Pancreas (tissue), 10 donors: ENCODE measurements at regions of chr2 and their contacts with region 1.

Region 1: DNA sequence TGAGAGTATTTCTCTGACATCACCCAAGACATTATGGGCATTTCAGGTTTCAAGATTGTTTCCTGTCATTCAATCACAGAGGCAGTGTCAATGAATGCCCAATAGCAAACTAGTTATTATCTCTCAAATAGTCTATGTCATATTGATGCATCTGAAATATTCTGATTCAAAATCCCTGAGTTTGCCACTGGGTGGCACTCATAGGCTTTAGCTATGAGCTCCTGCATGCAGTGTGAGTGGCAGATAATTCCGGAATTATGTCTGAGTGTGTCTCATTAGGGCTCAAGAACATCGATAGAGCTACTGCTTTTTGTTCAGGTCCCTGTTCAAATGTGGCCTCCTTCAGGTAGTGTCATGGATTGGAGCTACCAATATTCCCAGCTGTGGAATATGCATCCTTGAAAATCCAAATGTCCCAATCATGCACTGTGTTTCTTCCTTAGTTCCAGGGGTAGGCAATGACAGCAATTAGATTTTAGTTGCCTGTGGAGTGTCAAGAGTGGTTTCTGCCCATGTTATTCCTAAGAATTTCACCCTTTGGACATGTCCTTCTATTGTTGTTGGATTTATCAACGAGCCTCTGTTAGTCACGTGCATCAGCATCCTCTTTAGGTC is 7.8 kb upstream of the OR6B3 start:
- DNase-seq: peak in 2 of 6 donors; percentile 13 to 43
- ATAC-seq: peak; percentile 64 to 82 (median 74)
- H3K4me3 ChIP-seq: no peak overlapping the region
- H3K27ac ChIP-seq: no peak overlapping the region
- H3K4me1 ChIP-seq: no peaks in the 10 kb centered on the region
- H3K27me3 ChIP-seq: peaks cover 0 to 6% (median 0%) of the 10 kb centered on the region in 4 donors
- CTCF ChIP-seq: peak; percentile 19 to 34 (median 25)

Region 2: GRCh38 chr2:240143801-240144648 is 82.9 kb after region 1 on chr2:
- intact Hi-C with region 1: loop called (anchors 2 to 10 kb)
- DNase-seq: peak; percentile 44 to 93 (median 79)
- ATAC-seq: peak; percentile 71 to 98 (median 94)
- H3K4me3 ChIP-seq: no peak overlapping the region
- H3K27ac ChIP-seq: no peak overlapping the region
- H3K4me1 ChIP-seq: no peaks in the 10 kb centered on the region
- H3K27me3 ChIP-seq: no peaks in the 10 kb centered on the region
- CTCF ChIP-seq: peak; percentile 87 to 95 (median 90)

Region 3: DNA sequence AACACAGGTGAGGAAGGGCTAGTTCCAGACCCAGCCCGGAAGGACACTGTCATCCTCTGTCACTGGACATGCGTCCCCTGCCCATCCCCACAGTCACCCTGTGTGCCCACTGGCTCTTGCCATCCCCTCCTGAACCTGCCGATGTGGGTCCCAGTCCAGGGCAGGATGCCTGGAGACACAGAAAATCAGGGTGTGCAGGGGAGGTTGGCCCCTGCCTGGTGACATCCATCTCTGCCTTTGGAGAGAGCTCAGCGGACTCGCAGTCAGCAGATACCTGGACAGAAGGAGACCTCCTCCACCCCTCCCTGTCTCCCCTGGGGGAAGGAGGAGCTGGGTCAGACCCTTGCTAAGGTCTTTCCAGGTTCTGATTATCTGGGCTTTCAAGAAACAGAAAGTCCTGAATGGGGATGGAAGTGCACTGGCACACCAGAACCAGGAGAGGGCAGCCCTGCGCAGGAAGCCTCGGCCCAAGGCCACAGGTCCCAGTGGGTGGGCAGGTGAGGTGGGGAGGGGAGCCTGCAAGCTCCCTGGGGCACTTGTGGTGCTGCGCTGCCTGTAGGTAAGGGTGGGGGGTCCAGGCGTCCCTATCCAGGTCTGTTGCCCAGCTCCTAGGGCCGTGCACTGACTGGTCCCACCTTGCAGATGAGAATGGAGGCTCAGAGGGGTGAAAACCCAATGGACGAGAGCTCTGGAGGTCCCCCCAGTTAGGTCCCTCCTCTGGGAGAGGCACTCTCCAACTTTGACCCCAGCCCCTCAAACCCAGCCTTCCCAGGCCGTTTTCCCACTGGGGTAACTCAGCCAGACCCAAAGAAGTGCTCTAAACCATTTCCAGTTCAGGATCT is 89.1 kb after region 1 on chr2:
- intact Hi-C with region 1: loop called in 2 of 3 experiments (anchors 5 to 10 kb)
- DNase-seq: peak in 4 of 6 donors; percentile 15 to 74 (median 58)
- ATAC-seq: peak in 3 of 4 donors; percentile 80 to 86 (median 82)
- H3K4me3 ChIP-seq: no peak overlapping the region
- H3K27ac ChIP-seq: no peak overlapping the region
- H3K4me1 ChIP-seq: no peaks in the 10 kb centered on the region
- H3K27me3 ChIP-seq: no peaks in the 10 kb centered on the region
- CTCF ChIP-seq: peak; percentile 27 to 52 (median 49)

Region 4: GRCh38 chr2:240554767-240555493 is 493.8 kb after region 1 on chr2:
- intact Hi-C with region 1: no loop called
- DNase-seq: peak in 2 of 6 donors; percentile 14 to 16
- ATAC-seq: no peak
- H3K4me3 ChIP-seq: no peak overlapping the region
- H3K27ac ChIP-seq: no peak overlapping the region
- H3K4me1 ChIP-seq: peaks cover 6 to 13% (median 9%) of the 10 kb centered on the region in 3 donors
- H3K27me3 ChIP-seq: no peaks in the 10 kb centered on the region
- CTCF ChIP-seq: no peak

Region 5: GRCh38 chr2:241061275-241061674 is 1000.2 kb after region 1 on chr2:
- intact Hi-C with region 1: no loop called
- DNase-seq: no peak
- ATAC-seq: no peak
- H3K4me3 ChIP-seq: no peak overlapping the region
- H3K27ac ChIP-seq: peak overlapping the region in 1 of 4 donors; percentile 9
- H3K4me1 ChIP-seq: peaks cover 0 to 4% (median 0%) of the 10 kb centered on the region in 3 donors
- H3K27me3 ChIP-seq: no peaks in the 10 kb centered on the region
- CTCF ChIP-seq: no peak